Posterior cingulate gyrus (tissue), 11 donors: ENCODE measurements at regions of chr7 and their contacts with region 1.

Region 1: GRCh38 chr7:151631968-151632749 is 112.5 kb upstream of the RHEB start:
- DNase-seq: peak; percentile 65 to 96 (median 75)

Region 2: DNA sequence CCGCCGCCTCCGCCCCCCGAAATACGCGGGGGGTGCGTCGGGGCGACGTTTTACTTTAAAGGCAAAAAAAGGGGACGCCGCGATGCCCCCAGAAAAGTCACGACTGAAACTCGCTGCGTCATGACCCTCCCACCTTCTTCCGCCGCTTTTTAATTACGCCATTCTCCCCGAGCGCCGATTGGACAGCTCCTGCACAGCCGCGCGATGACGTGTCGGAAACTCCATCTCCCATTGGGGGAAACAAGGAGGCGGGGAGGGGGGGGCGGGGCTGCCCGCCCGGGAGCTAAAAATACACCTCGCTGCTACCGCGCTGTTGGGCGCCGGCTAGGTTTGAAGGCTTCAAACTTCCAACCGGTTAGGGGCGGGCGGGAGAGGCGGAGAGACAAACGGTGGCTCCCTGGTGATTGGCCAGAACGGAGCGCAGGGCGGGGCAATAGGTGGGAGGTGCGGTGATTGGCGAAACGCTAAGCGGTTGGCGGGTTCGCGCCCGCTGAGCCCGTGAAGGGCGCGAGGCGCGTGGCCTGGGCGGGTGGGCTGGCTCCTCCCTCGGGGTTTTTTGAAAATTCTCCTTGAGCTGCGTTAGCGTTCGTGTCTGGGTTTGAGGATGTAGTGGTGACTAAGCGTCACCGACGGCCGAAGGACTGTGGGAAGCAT is 112.3 kb before region 1 on chr7 and contains the start of gene RHEB:
- intact Hi-C with region 1: loop called (anchors 10 kb)
- DNase-seq: peak; percentile 91 to 100 (median 98)